ENCODE measurements at regions of chr13 and their contacts with region 1.

Region 1: DNA sequence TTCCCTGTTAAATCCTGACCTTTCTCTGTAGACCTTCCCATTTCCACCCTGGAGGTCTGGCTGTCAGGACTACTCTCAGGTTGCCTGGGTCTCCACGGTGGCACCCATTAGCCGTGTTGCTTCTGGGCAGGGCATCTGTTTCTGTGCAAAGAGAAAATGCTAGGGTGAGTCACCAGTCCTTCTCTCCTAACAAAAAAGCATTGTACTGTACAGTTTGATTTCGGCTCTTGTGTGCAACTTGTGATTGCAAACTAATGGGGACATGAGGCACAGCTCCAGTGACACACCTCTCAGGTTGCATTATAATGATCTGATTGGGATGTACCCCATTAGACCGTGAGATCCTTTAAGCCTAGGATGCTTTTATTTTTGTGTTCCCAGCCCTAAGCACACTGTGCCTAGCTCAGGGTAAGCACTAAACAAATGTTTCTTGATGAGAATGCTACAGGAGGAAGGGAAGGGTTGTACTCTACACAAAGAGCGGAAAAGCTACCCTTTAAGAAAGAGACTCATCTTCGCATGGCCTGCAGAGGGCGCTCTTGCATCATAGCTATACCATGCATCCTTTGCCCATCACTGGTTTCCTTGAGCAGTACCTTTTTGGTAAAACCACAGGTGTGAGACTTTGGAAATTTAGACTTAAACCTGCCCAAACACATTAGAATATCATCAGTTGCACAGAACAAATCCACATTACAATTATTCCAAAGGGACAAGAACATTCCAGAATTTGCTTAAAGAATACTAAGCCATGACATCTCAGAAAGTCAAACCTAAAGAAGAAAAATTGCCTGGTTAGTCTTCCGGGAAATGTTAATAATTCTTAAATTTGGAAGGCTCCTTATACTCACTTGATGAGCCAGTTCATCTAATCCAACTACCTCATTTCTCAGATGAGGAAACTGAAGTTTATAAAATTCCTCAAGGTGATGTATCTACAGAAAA is 20.3 kb upstream of the TRIM13 start:
- DNase-seq: peak; percentile 88
- ATAC-seq: peak; percentile 50

Region 2: DNA sequence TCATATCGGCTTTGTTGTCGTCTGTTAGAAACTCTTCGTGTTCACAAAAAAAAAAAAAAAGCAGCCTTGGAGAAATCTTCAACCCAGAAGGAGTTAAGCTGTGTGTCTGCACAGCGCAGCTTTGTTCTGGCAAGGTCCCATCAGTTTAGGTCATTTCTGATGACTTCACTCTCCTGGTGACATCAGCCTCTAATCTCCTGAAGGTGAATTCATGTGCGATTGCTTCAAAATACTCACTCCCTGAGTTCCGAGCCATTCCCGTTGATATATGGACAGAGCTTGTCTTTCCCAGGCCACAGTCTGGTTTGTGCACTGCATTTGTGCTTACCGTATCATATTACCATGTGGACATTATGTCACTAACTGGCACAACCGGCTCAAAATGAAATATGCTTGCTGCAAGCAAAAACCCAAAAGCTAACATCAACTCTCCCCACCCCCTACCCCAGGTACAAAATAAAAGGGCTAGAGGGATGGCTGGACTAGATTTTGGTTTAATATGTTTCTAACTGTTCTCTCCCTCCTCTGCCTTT is 381.1 kb after region 1 on chr13:
- intact Hi-C with region 1: loop called (anchors 10 kb)
- DNase-seq: no peak
- ATAC-seq: peak; percentile 71

Measured in Right ventricle myocardium inferior (tissue), 1 donor.